ENCODE measurements at regions of chr6 and their contacts with region 1.

Region 1: GRCh38 chr6:135117413-135117968 is 62.9 kb upstream of the HBS1L start:
- DNase-seq: peak; percentile 35
- H3K4me3 Mint-ChIP-seq: peak overlapping the region; percentile 56
- H3K27ac Mint-ChIP-seq: peak overlapping the region; percentile 76
- H3K4me1 Mint-ChIP-seq: peaks cover 76% of the 10 kb centered on the region
- H3K27me3 Mint-ChIP-seq: no peaks in the 10 kb centered on the region

Region 2: DNA sequence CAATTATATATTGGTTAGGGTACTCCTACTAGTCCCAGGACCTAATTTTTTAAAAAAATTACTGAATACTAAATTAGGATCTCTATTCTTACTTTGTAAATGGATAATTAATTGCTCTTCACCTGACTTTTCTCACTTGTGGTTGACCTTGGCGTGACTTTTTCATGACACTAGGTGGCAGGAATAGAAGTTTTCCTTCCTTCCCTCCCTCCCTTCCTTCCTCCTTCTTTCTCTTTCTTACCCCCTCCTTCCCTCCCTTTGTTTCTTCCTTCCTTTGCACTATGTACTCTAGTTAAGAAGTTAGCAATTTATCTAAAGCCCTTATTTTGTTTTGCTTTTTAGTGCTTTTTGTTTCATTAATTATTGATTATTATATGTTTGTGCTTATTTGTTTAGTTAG is 42.5 kb before region 1 on chr6:
- CTCF ChIA-PET with region 1: no interaction called
- POLR2A ChIA-PET with region 1: no interaction called
- DNase-seq: no peak
- H3K4me3 Mint-ChIP-seq: no peak overlapping the region
- H3K27ac Mint-ChIP-seq: no peak overlapping the region
- H3K4me1 Mint-ChIP-seq: peaks cover 7% of the 10 kb centered on the region
- H3K27me3 Mint-ChIP-seq: no peaks in the 10 kb centered on the region

Region 3: GRCh38 chr6:135128268-135128914 is 10.9 kb after region 1 on chr6:
- CTCF ChIA-PET with region 1: interaction called, 14 read pairs
- POLR2A ChIA-PET with region 1: interaction called, 4 read pairs
- DNase-seq: peak; percentile 55
- H3K4me3 Mint-ChIP-seq: peak overlapping the region; percentile 47
- H3K27ac Mint-ChIP-seq: peak overlapping the region; percentile 96
- H3K4me1 Mint-ChIP-seq: peaks cover 36% of the 10 kb centered on the region
- H3K27me3 Mint-ChIP-seq: no peaks in the 10 kb centered on the region